Ascending aorta (tissue), 2 donors: ENCODE measurements at regions of chr10 and their contacts with region 1.

Region 1: GRCh38 chr10:132307823-132308587 is at the start of gene STK32C:
- DNase-seq: peak; percentile 50 to 93
- H3K4me3 ChIP-seq: peak within 1 kb of the TSS; percentile 70 to 97
- H3K27ac ChIP-seq: peak within 1 kb of the TSS; percentile 66 to 81
- H3K4me1 ChIP-seq: peaks cover 6 to 8% of the 10 kb centered on the region in 2 donors
- H3K27me3 ChIP-seq: no peaks in the 10 kb centered on the region
- CTCF ChIP-seq: no peak
- total RNA-seq, gene STK32C: 16.2 TPM

Region 2: DNA sequence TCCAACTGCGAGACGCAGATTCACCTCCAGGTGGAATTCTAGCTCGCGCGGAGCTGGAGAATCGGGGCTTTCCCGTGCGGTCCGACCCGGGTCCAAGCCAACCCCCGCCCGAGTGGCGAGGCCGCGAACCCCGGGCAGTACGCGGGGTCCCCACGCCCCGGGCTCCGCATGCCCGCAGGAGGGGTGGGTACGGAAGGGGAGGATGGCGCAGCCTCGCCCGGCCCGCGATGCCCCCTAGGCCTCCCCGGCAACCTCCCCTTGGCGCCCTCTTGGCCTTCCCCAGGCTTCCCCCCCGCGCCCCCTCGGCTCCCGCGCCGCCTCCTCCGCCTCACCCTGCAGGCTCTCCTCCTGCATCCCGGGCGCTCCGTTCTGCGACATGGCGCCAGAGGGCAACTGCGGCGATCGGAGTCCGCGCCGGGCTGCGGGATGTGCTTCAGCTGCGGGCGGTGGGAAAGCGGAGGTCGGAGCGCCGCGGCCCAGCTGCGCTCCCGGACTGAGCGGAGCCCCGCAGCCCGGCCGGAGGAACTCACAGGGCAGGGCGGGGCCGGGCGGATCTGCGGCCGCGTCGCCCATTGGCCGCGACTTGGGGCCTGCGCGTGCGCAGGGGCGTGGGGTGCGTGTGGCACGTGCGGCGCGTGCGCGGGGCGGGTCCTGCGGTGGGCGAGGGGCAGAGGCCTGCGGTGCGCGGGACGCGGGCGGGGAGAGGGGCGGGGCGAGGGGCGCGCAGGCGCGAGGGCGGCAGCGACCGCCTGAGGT is 326.4 kb before region 1 on chr10 and contains the start of gene BNIP3:
- intact Hi-C with region 1: loop called (anchors 5 kb)
- DNase-seq: peak; percentile 82 to 96
- H3K4me3 ChIP-seq: peak within 1 kb of the TSS; percentile 92 to 99
- H3K27ac ChIP-seq: peak within 1 kb of the TSS; percentile 48 to 67
- H3K4me1 ChIP-seq: peaks cover 6 to 11% of the 10 kb centered on the region in 2 donors
- H3K27me3 ChIP-seq: no peaks in the 10 kb centered on the region
- CTCF ChIP-seq: peak in 2 of 3 experiments; percentile 6 to 9
- total RNA-seq, gene BNIP3: 18.3 TPM

Region 3: DNA sequence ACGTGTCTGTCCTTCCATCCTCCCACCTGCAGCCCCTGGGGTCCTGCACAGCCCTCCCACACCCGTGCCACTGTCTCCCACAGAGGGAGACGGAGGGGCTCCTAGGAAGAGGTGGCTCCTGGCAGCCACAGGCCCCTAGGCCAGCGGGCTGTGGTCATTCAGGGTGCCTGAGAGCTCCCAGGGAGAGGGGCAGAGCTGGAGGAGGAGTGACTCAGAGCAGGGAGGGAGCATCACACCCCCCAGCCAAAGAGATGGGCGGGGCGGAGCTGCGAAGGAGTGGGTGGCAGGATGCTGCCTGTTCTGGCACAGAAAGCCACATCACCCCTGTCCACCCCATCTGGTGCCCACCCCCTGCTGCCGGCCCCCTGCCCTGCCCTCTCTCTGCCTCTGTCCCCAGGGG is 50.7 kb before region 1 on chr10:
- intact Hi-C with region 1: no loop called
- DNase-seq: no peak
- H3K4me3 ChIP-seq: no peak overlapping the region
- H3K27ac ChIP-seq: no peak overlapping the region
- H3K4me1 ChIP-seq: no peaks in the 10 kb centered on the region
- H3K27me3 ChIP-seq: no peaks in the 10 kb centered on the region
- CTCF ChIP-seq: no peak

Region 4: GRCh38 chr10:132354356-132355094 is 46.5 kb after region 1 on chr10:
- intact Hi-C with region 1: loop called (anchors 5 kb)
- DNase-seq: no peak
- H3K4me3 ChIP-seq: no peak overlapping the region
- H3K27ac ChIP-seq: no peak overlapping the region
- H3K4me1 ChIP-seq: no peaks in the 10 kb centered on the region
- H3K27me3 ChIP-seq: no peaks in the 10 kb centered on the region
- CTCF ChIP-seq: no peak

Region 5: DNA sequence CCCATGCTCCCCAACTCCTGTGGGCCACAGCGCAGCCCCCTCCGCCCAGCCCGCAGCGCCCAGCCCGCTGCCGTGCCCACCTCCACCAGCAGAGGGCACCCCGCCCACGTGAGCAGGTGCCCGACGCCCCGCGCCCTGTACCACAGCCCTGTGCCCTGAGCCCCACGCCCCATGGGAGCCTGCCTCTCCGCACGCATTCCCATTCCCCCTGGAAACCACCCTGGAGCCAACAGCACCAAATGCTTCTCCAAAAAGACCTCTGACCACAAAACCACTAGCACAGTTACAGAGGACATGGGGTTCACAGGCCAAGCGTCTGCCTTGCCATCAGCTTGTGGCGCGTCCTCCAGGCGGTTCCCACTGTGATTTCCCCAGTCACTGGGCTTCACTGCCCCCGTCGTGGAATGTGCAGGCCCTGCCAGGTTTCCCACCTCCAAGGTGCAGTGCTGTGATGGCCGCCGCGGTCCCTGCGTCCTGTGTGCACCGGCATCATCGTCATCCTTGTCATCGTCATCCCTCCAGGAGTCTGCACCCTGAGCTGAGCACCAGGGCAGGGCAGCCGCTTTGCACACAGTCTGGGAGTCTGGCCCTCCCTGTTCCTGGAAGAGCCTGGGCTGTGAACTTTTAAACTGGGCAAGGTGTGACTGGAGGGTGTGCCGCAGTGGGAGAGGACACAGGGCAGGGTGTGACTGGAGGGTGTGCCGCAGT is 150.7 kb after region 1 on chr10:
- intact Hi-C with region 1: loop called (anchors 5 kb)
- DNase-seq: no peak
- H3K4me3 ChIP-seq: no peak overlapping the region
- H3K27ac ChIP-seq: no peak overlapping the region
- H3K4me1 ChIP-seq: peaks cover 5 to 6% of the 10 kb centered on the region in 2 donors
- H3K27me3 ChIP-seq: no peaks in the 10 kb centered on the region
- CTCF ChIP-seq: peak; percentile 93 to 99 (median 98)

Region 6: DNA sequence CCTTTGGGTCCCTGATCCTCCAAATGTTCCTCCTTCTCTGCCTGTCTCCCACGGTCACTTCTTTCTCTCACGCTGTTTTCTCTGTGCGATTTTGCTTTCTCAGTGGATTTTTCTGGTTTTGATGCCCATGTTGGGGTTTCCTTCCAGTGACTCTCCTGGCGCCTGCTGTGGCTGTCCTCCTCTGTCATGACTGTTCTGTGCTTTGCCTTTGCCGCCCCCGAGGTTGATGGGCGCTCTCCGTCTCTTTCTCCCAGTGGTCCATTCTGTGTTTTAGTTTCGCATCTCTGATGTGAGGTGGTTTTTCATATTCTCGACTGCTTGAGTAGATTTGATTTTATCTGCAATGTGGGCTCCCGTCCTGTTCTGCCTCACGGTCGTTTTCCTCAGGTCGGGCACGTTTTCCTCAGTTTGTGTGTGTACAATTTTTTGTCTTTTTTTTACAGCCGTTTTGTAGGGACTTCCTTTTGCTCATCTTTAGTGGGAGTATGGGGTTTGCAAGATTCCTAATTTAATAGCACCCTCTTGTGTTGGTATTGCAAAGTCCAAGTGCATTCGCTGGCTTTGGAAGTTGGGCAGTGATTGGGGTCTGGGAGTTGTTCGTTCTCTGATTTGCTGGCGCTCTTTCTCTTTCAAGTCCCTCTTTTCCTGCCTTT is 329.6 kb after region 1 on chr10:
- intact Hi-C with region 1: loop called (anchors 5 kb)
- DNase-seq: peak in 1 of 2 donors; percentile 62
- H3K4me3 ChIP-seq: no peak overlapping the region
- H3K27ac ChIP-seq: peak overlapping the region; percentile 45 to 50
- H3K4me1 ChIP-seq: peaks cover 15 to 38% of the 10 kb centered on the region in 2 donors
- H3K27me3 ChIP-seq: no peaks in the 10 kb centered on the region
- CTCF ChIP-seq: peak; percentile 62 to 81 (median 68)

Region 7: DNA sequence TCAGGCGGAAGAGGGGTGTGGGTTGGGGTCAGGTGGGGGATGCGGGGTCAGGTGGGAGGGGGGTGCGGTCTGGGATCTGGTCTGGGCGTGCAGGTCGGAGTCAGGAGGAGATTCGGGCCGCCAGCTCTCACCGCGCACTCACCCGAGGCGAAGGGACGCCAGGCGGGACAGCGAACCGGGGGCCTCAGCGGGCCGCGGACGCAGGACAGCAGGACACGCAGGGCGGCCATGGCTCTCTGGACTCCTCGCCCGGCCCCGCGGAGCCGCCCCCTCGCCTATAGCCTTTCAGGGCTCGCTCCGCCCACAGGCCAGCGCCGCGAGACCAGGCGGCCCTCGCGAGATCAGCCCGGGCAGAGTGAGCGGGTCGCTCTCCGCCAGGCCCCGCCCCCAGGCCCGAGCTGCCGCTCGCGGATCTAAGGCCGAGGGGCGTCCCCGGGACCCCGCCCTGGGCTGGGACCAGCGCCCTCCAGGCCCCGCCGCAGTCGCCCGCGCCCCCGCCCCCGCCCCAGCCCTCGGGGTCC is 1065.2 kb after region 1 on chr10 and contains the start of gene ECHS1:
- intact Hi-C with region 1: loop called (anchors 10 kb)
- DNase-seq: peak; percentile 83 to 97
- H3K4me3 ChIP-seq: peak within 1 kb of the TSS; percentile 66 to 92
- H3K27ac ChIP-seq: peak within 1 kb of the TSS; percentile 73 to 88
- H3K4me1 ChIP-seq: peaks cover 4 to 12% of the 10 kb centered on the region in 2 donors
- H3K27me3 ChIP-seq: no peaks in the 10 kb centered on the region
- CTCF ChIP-seq: no peak
- total RNA-seq, gene ECHS1: 68.0 TPM